Activated CD8-positive, alpha-beta memory T cell treated with anti-CD3 and anti-CD28 coated beads, Interleukin-2, amount 10 ng/mL, durations not matched to agents 7 days and 5 days (primary cell): ENCODE measurements at regions of chr20 and their contacts with region 1.

Region 1: DNA sequence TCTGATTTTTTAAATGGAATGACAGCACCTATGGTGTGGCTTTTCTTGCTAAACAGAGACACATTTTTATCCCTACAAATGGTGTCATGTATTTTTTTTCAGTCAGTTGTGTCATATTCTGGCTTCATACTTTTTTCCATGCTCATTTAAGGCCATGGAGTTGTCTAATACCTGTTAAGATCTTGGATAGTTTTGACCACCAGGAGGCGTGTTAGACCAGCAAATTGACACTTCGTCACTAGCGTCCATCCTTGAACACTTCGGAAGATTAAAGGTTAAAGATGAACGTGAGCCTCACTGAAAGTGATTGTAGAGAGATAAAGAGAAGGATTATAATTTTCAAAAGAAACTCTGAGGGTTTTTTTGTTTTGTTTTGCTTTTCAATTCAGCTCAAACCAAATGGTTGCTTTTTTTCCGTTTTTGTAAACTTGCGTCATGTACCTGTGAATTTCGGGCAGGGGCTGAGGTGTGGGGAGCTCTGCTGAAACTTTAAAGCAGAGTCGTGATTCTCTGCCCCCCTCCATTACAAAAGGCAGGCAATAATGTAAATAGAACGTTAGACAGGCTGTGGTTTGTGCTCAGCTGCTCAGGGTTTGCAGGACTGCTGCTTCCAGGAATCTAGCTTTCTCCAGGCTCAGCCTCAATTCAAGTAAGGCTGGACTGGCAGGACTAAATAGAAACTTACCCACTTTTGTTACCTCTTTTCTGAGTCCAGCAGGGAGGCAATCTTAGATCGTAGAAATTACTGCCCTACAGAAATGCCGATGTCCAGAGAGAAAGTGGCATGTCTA is 245.1 kb downstream of the FOXA2 start:
- DNase-seq: peak; percentile 45
- ATAC-seq: no peak
- H3K4me3 Mint-ChIP-seq: no peak overlapping the region
- H3K27ac Mint-ChIP-seq: no peak overlapping the region
- H3K4me1 Mint-ChIP-seq: no peaks in the 10 kb centered on the region
- H3K27me3 Mint-ChIP-seq: no peaks in the 10 kb centered on the region

Region 2: DNA sequence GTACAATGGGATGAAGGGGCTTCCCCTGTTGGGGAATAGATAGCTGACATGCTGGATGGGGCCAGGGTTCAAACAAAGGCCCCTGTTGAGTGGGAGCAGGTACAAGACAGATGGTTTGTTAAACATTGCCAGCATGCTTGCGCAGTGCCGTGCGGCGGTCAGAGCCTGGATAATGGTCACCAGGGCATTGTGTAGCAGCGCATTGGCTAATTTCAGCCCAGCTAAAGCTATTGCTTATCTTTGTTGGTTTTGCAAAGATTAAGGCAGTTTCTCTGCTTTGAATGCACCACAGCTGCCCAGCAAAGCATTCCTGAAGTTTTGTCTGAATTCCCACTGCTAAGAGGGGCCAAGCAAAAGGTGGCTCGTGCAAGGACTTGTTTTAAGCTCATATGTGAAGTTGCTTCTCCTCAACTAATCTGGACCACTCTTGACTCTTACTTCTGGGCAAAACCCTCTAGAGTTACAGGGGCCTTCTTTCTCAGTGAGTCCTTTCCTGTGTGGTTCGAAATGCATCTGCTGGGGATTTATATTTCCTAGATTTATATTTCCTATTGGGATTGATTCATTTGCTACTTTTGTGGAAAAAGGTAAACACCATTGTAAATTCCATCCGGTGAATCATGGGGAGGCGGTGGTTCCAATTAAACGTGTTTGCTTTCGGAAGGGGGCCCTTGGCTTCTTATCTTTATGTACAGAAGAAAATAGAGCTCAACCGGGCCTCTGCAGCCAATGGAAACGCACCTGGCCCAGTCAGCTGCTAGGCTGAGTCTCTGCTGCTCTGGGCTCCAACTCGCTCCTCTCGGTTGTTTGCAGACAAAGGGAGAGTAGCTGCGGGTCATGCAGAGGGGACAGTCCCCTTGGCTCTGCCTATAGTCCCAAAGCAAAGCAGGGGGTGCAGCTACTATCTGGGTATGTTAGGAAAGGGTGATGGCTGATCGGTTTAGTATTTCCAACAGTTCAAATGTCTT is 172.9 kb after region 1 on chr20:
- CTCF ChIA-PET with region 1: no interaction called
- DNase-seq: no peak
- ATAC-seq: no peak
- H3K4me3 Mint-ChIP-seq: no peak overlapping the region
- H3K27ac Mint-ChIP-seq: no peak overlapping the region
- H3K4me1 Mint-ChIP-seq: no peaks in the 10 kb centered on the region
- H3K27me3 Mint-ChIP-seq: no peaks in the 10 kb centered on the region

Region 3: DNA sequence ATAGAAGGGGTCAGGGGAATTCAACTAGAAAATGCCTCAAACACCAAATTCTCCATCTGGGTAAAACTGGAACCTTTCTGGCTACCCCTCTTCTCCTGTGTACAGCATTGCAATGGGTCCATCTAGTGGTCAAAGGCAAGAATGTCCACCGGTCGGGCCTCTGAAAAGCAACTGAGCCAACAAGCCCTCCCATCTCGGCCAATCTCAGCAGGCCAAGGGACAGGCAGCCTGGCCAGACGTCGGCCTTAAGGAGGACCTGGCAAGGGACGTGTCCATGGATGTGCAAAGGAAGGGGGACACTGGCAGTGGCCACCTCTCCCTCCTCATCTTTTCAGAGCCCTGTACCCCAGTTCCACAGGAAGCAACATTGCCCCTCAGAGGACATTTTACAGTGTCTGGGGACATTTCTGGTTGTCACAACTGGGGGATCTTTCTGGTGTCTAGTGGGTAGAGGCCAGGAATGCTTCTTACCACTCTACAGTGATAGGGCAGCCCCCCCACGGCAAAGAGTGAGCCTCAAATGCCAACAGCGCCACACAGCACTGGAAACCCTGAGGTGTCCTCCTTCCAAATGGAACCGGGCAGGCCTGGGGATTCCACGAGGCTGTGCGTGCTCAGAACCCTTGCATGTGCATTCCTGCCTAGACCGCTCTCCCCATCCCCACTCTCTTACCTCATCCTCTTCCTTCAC is 344.9 kb after region 1 on chr20:
- CTCF ChIA-PET with region 1: interaction called, 11 read pairs
- DNase-seq: peak; percentile 49
- ATAC-seq: no peak
- H3K4me3 Mint-ChIP-seq: no peak overlapping the region
- H3K27ac Mint-ChIP-seq: no peak overlapping the region
- H3K4me1 Mint-ChIP-seq: no peaks in the 10 kb centered on the region
- H3K27me3 Mint-ChIP-seq: no peaks in the 10 kb centered on the region